ENCODE measurements at regions of chr14 and their contacts with region 1.

Region 1: DNA sequence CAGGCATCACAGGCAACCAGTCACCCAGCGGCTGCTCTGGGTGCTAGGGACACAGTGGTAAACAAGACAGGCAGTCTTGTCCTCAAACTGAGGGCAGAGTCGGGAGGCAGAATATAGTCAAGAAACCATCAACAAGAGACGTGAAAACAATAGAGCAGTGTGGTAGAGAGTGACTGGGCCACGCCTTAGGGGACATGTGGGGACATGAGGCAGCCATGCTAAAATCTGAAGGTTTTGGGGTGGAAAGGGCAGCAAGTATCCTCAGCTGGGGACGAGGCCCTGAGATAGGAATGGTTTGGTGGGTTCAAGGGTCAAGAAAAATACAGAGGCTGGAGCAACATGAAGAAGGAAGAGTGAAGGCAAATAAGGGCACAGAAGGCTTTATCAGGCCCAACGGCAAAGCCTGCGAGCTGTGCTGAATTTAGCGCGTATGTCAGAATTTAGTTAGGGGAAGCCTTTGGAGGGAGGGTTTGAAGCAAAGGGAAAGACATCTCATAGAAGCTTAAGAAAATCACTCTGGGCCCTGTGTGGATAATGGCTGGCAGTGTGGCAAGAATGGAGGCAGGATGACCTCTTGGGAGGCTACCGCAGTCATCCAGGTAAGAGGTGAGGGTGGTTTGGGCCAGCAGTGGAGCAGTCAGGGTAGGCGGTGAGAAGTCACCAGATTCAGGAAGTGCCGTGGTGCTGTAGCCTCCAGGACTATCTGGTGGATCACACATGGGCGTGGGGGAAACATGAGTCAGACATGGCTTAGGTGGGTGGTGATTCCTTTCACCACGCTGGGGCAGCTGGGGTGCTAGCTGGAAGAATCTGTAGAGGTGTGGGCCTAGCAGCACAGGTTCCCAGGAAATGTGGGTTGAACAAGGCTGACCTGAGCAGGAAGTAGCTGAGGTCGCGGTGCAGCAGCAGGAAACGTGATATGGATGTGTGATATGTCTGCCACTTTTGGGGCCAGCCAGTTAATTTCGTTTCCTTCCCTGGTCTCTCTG is 3.0 kb downstream of the EVL start:
- DNase-seq: peak; percentile 89
- H3K4me3 Mint-ChIP-seq: peak overlapping the region; percentile 85
- H3K27ac Mint-ChIP-seq: peak overlapping the region; percentile 99
- H3K4me1 Mint-ChIP-seq: peaks cover 79% of the 10 kb centered on the region
- H3K27me3 Mint-ChIP-seq: no peaks in the 10 kb centered on the region

Region 2: DNA sequence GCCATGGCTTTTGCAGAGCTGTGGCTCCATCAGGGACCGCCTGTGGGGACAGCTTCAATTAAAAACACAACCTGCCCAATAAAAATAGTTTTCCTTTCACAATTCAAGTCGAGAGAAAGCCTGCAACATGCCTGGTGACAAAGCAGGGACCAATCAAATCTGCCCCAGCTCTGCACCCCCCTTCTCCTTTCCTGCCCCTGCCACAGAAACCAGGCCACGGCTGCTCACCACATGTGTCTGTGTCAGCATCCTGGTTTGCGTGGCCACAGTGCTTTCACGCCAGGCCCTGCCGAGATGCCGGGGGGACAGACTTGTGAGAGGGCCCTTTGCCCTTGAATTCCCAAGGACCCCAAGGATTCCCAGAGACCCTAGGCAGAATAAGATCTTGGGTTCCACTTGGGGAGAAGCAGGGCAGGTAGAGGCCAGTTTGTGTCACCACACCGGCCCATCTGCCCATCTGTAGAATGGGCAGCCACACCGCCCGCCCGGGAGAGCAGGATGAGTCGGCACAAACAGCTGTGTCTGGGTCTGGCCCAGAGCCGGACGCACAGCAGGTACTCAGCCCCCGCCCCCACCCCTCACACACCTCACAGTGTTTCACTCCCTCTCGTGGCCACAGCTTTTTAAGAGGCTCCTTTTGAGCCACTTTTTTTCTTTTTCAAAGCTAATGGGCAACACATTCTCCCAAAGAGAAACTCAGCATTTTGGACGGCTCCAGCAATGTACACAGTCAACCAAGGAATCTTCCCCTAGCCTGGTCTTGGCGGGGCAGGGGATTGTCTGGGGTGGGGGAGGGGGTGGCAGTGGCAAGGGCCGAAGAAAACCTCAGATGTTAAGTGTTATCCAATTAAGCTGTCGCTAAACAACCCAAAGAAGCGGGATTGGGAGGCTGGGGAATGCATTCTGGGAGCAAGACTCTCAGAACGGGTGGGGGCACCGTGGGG is 837.8 kb before region 1 on chr14:
- intact Hi-C with region 1: loop called (anchors 10 kb)
- DNase-seq: peak; percentile 82
- H3K4me3 Mint-ChIP-seq: peak overlapping the region; percentile 62
- H3K27ac Mint-ChIP-seq: peak overlapping the region; percentile 93
- H3K4me1 Mint-ChIP-seq: peaks cover 85% of the 10 kb centered on the region
- H3K27me3 Mint-ChIP-seq: no peaks in the 10 kb centered on the region

Region 3: GRCh38 chr14:99716850-99717681 is 351.2 kb before region 1 on chr14:
- intact Hi-C with region 1: no loop called
- DNase-seq: no peak
- H3K4me3 Mint-ChIP-seq: no peak overlapping the region
- H3K27ac Mint-ChIP-seq: no peak overlapping the region
- H3K4me1 Mint-ChIP-seq: no peaks in the 10 kb centered on the region
- H3K27me3 Mint-ChIP-seq: peaks cover 14% of the 10 kb centered on the region

Region 4: GRCh38 chr14:99971941-99972747 is 96.1 kb before region 1 on chr14:
- intact Hi-C with region 1: loop called (anchors 2 kb)
- DNase-seq: no peak
- H3K4me3 Mint-ChIP-seq: peak overlapping the region; percentile 95
- H3K27ac Mint-ChIP-seq: peak overlapping the region; percentile 86
- H3K4me1 Mint-ChIP-seq: peaks cover 20% of the 10 kb centered on the region
- H3K27me3 Mint-ChIP-seq: peaks cover 24% of the 10 kb centered on the region

Region 5: GRCh38 chr14:100085462-100085861 is 17.2 kb after region 1 on chr14:
- intact Hi-C with region 1: loop called (anchors 1 kb)
- DNase-seq: no peak
- H3K4me3 Mint-ChIP-seq: no peak overlapping the region
- H3K27ac Mint-ChIP-seq: peak overlapping the region; percentile 82
- H3K4me1 Mint-ChIP-seq: peaks cover 83% of the 10 kb centered on the region
- H3K27me3 Mint-ChIP-seq: no peaks in the 10 kb centered on the region

Region 6: GRCh38 chr14:100221533-100222223 is 153.4 kb after region 1 on chr14:
- intact Hi-C with region 1: loop called (anchors 5 kb)
- DNase-seq: peak; percentile 68
- H3K4me3 Mint-ChIP-seq: no peak overlapping the region
- H3K27ac Mint-ChIP-seq: no peak overlapping the region
- H3K4me1 Mint-ChIP-seq: peaks cover 8% of the 10 kb centered on the region
- H3K27me3 Mint-ChIP-seq: no peaks in the 10 kb centered on the region

Region 7: GRCh38 chr14:101823511-101824120 is 1755.4 kb after region 1 on chr14:
- intact Hi-C with region 1: loop called (anchors 5 kb)
- DNase-seq: peak; percentile 75
- H3K4me3 Mint-ChIP-seq: peak overlapping the region; percentile 75
- H3K27ac Mint-ChIP-seq: peak overlapping the region; percentile 97
- H3K4me1 Mint-ChIP-seq: peaks cover 80% of the 10 kb centered on the region
- H3K27me3 Mint-ChIP-seq: no peaks in the 10 kb centered on the region